PC-3 (cell line): ENCODE measurements at regions of chr10 and their contacts with region 1.

Region 1: DNA sequence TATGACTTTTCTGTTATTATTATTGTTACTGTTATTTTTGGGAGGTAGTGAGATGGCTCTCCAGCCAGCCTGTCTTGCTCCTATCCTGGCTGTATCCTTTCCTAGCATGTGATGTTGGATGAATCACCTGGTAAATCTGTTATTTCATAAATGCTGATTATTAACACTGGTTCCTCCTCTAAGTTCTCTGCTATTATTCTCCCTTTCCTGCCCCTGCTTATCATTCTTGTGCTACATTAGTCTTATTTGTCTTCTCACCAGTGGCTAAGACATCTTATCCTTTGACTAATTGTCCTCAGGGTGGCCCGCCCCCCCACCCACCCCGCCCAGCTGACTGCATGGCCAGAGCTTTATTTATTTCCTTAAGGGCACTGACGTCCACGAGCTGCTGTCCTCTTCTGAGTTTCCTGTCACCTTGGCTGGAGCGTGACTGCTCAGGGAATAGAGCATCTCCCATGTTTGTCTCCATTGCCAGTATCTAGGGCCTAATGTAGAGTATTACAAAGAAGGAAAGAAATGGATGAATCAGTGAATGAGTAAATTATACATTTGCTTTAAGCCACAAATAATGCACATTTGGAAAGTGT is 110.1 kb upstream of the KLF6 start:
- DNase-seq: peak; percentile 49
- ATAC-seq: peak; percentile 76
- H3K4me3 ChIP-seq: no peak overlapping the region
- H3K27ac ChIP-seq: peak overlapping the region; percentile 85
- H3K4me1 ChIP-seq: peaks cover 38% of the 10 kb centered on the region
- H3K27me3 ChIP-seq: no peaks in the 10 kb centered on the region
- CTCF ChIP-seq: no peak

Region 2: GRCh38 chr10:3701491-3701890 is 193.6 kb before region 1 on chr10:
- CTCF ChIA-PET with region 1: no interaction called
- POLR2A ChIA-PET with region 1: no interaction called
- intact Hi-C with region 1: no loop called
- DNase-seq: no peak
- ATAC-seq: no peak
- H3K4me3 ChIP-seq: no peak overlapping the region
- H3K27ac ChIP-seq: no peak overlapping the region
- H3K4me1 ChIP-seq: no peaks in the 10 kb centered on the region
- H3K27me3 ChIP-seq: no peaks in the 10 kb centered on the region
- CTCF ChIP-seq: no peak

Region 3: GRCh38 chr10:3805791-3806461 is 89.2 kb before region 1 on chr10:
- CTCF ChIA-PET with region 1: no interaction called
- POLR2A ChIA-PET with region 1: interaction called, 8 read pairs
- intact Hi-C with region 1: loop called (anchors 2 kb)
- DNase-seq: peak; percentile 77
- ATAC-seq: peak; percentile 29
- H3K4me3 ChIP-seq: peak overlapping the region; percentile 54; the same call in 1 of the 2 replicates
- H3K27ac ChIP-seq: peak overlapping the region; percentile 100
- H3K4me1 ChIP-seq: peaks cover 72% of the 10 kb centered on the region
- H3K27me3 ChIP-seq: no peaks in the 10 kb centered on the region
- CTCF ChIP-seq: no peak

Region 4: DNA sequence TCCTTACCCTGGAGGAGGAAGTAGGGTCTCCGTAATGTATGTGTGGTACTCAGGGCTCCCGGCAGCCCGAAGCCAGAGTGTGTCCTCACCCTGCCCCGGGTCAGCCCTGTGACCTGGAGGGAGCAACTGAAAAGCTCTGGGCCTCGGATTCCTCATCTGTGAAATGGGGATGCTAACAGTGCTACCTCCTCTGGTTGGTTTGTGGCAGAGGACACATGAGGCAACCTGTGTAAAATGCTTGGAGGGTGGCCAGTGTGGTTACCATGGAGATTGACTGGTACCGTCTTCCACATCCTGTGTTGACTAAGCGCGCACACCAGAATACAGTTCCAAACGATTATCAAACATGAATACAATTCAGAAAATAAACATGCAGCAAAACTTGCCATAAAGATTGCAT is 53.7 kb after region 1 on chr10:
- CTCF ChIA-PET with region 1: no interaction called
- POLR2A ChIA-PET with region 1: no interaction called
- intact Hi-C with region 1: no loop called
- DNase-seq: peak; percentile 88
- ATAC-seq: peak; percentile 49
- H3K4me3 ChIP-seq: no peak overlapping the region
- H3K27ac ChIP-seq: no peak overlapping the region
- H3K4me1 ChIP-seq: peaks cover 18% of the 10 kb centered on the region
- H3K27me3 ChIP-seq: no peaks in the 10 kb centered on the region
- CTCF ChIP-seq: no peak